ENCODE measurements at regions of chr20 and their contacts with region 1.

Region 1: GRCh38 chr20:1965520-1966351 is 28.1 kb downstream of the PDYN start:
- DNase-seq: peak; percentile 52 to 82
- ATAC-seq: peak; percentile 69

Region 2: DNA sequence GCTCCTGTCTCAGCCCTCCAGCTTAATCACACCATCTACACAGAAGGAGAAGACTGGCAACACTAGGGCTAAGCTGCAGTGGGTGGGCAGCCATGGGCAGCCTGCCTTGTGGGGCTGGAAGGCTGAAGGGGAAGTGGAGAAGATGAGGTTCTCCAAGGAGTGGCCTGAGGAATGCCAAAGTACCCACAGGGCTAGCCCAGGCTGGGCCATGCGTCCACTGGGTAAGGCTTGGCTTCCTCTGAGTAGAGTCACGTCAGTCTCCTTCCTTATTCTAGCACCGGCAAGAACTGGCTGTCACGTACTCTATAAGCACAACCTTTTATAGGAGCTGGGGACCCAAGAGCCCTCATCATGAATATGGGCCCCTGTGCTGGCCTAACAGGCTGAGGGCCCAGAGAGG is 181.2 kb before region 1 on chr20:
- intact Hi-C with region 1: loop called in 1 of 2 experiments (anchors 10 kb)
- DNase-seq: no peak
- ATAC-seq: no peak

Measured in left colon (tissue), 2 donors.